ENCODE measurements at regions of chr5 and their contacts with region 1.

Region 1: GRCh38 chr5:166014256-166014655 is 2277.2 kb upstream of the WWC1 start:
- DNase-seq: no peak
- H3K4me3 ChIP-seq: no peak overlapping the region
- H3K27ac ChIP-seq: no peak overlapping the region
- H3K4me1 ChIP-seq: peaks cover 7% of the 10 kb centered on the region
- H3K27me3 ChIP-seq: no peaks in the 10 kb centered on the region
- CTCF ChIP-seq: no peak

Region 2: GRCh38 chr5:165940541-165940940 is 73.7 kb before region 1 on chr5:
- CTCF ChIA-PET with region 1: no interaction called
- dilution Hi-C with region 1: no loop called
- in situ Hi-C with region 1: no loop called
- intact Hi-C with region 1: no loop called
- DNase-seq: no peak
- H3K4me3 ChIP-seq: no peak overlapping the region
- H3K27ac ChIP-seq: no peak overlapping the region
- H3K4me1 ChIP-seq: no peaks in the 10 kb centered on the region
- H3K27me3 ChIP-seq: no peaks in the 10 kb centered on the region
- CTCF ChIP-seq: no peak

Region 3: DNA sequence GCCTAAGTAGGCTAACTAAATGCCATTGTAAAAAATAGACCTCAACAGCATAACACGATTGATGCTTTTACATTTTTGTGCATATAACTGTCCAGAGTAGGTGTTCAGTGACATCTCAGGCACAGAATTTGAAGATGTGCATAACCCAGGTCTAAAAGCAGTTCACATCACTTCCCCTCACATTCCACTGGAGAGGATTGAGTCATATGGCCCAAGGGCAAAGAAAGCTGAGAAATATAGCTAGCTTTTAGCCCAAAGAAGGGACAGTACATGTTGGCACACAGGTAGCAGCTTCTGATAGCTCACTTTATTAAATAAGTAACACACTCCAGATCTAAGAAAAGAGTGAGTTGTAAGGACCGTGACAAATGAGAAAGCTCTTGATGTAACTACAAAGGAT is 17.7 kb after region 1 on chr5:
- CTCF ChIA-PET with region 1: no interaction called
- dilution Hi-C with region 1: no loop called
- in situ Hi-C with region 1: no loop called
- intact Hi-C with region 1: loop called (anchors 1 kb)
- DNase-seq: peak; percentile 4
- H3K4me3 ChIP-seq: no peak overlapping the region
- H3K27ac ChIP-seq: peak overlapping the region; percentile 57
- H3K4me1 ChIP-seq: peaks cover 20% of the 10 kb centered on the region
- H3K27me3 ChIP-seq: no peaks in the 10 kb centered on the region
- CTCF ChIP-seq: no peak